ENCODE measurements at regions of chr2 and their contacts with region 1.

Region 1: DNA sequence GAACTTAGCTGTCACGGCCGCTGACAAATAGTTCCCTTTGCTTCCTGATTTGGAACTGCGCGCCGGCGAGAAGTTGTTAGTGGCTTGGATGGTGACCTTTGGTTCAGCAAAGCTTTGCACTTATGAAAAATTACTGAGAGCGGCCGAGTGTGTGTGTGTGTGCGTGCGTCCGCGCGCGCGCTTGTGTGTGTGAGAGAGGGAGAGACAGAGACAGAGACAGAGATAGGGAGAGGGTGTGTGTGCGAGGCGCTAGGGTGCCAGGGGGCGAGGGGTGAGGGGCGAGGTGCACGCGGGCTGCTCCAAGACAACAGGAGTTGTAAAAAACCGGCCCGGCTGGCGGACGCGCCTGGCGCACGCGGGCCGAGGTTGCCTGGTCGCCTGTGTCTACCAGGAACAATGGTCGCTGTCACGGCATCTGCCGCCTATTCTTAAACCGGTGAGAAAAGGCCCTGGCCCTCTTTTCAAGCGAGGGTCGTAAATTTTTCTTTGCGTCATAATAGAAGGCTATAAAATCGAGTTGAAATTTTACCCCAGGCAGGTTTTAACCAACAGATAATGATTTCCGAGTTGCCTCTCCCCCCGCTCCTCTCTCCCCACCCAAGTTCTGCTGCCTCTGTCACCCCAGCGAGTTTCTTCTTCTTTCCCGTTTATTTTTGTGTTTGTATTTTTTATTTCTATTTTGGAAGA is 535 bp downstream of the HOXD3 start:
- DNase-seq: no peak
- ATAC-seq: no peak
- H3K4me3 ChIP-seq: peak overlapping the region in 1 of 4 donors; percentile 28
- H3K27ac ChIP-seq: no peak overlapping the region
- H3K4me1 ChIP-seq: peaks cover 0 to 8% (median 0%) of the 10 kb centered on the region in 3 donors
- H3K27me3 ChIP-seq: peaks cover 0 to 68% (median 14%) of the 10 kb centered on the region in 4 donors
- CTCF ChIP-seq: no peak

Region 2: GRCh38 chr2:175136334-175137215 is 1021.1 kb before region 1 on chr2:
- intact Hi-C with region 1: no loop called
- DNase-seq: no peak
- ATAC-seq: no peak
- H3K4me3 ChIP-seq: no peak overlapping the region
- H3K27ac ChIP-seq: no peak overlapping the region
- H3K4me1 ChIP-seq: no peaks in the 10 kb centered on the region
- H3K27me3 ChIP-seq: no peaks in the 10 kb centered on the region
- CTCF ChIP-seq: no peak

Region 3: DNA sequence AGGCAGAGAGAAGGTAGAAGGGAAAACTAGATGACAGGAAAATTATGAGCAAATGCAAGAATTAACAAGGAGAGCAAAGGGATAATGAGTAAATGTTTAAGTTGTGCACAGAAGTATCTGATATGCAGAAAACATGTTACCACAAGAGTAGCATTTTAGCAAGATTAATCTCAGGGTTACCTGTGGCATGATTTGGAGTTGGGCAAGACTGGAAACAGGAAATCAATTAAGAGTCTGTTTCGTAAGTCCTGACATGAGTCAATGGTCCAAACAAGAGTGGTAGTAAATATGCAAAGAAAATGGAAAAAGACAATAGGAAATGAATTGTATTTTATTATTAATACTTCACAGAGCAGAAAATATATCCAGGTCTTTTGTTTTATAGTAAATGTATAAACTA is 94.3 kb after region 1 on chr2:
- intact Hi-C with region 1: no loop called
- DNase-seq: no peak
- ATAC-seq: no peak
- H3K4me3 ChIP-seq: no peak overlapping the region
- H3K27ac ChIP-seq: no peak overlapping the region
- H3K4me1 ChIP-seq: no peaks in the 10 kb centered on the region
- H3K27me3 ChIP-seq: peaks cover 0 to 3% (median 0%) of the 10 kb centered on the region in 4 donors
- CTCF ChIP-seq: no peak

Region 4: DNA sequence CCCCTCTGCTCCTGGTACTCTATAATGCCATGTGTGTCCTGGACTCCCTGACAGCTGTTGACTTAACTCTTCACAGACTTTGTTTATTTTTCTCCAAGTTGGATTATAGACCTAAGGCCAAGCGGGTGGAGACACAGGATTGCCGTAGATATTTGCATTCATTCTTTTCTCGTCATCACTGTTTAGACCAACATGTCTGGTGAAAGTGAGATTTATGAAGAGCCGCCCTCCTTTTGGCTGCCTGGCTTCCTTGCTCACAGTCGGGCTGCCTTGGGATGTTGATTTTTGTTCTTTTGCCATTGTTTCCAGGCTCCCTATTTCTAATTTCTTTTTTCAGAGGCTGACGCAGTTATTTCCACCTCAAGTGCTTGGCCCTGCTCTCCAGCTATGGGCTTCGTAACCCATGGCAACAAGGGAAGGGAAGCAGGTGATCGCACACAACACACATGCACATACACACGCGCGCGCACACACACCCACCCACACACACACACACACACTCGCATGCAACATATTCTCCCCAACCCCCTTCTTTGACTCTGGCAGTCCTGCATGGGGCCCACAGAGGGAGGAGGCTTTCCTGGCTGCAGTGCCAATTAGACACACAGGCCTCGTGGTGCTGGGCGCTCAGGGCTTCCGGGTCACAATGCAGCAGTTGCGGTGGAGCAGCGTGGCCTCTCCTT is 408.1 kb after region 1 on chr2:
- intact Hi-C with region 1: loop called in 1 of 3 experiments (anchors 10 kb)
- DNase-seq: no peak
- ATAC-seq: no peak
- H3K4me3 ChIP-seq: no peak overlapping the region
- H3K27ac ChIP-seq: no peak overlapping the region
- H3K4me1 ChIP-seq: no peaks in the 10 kb centered on the region
- H3K27me3 ChIP-seq: no peaks in the 10 kb centered on the region
- CTCF ChIP-seq: no peak

Measured in pancreas (tissue), 10 donors.